Dendritic cell treated with granulocyte-macrophage colony-stimulating factor and Interleukin-4, amounts not matched to agents 40 ng/mL and 50 ng/mL, for 4 days (primary cell): ENCODE measurements at regions of chr5 and their contacts with region 1.

Region 1: GRCh38 chr5:133968049-133968980 is at the start of gene C5orf15:
- H3K4me3 Mint-ChIP-seq: peak within 1 kb of the TSS; percentile 90
- H3K27ac Mint-ChIP-seq: peak within 1 kb of the TSS; percentile 97
- H3K4me1 Mint-ChIP-seq: peaks cover 29% of the 10 kb centered on the region
- H3K27me3 Mint-ChIP-seq: no peaks in the 10 kb centered on the region

Region 2: DNA sequence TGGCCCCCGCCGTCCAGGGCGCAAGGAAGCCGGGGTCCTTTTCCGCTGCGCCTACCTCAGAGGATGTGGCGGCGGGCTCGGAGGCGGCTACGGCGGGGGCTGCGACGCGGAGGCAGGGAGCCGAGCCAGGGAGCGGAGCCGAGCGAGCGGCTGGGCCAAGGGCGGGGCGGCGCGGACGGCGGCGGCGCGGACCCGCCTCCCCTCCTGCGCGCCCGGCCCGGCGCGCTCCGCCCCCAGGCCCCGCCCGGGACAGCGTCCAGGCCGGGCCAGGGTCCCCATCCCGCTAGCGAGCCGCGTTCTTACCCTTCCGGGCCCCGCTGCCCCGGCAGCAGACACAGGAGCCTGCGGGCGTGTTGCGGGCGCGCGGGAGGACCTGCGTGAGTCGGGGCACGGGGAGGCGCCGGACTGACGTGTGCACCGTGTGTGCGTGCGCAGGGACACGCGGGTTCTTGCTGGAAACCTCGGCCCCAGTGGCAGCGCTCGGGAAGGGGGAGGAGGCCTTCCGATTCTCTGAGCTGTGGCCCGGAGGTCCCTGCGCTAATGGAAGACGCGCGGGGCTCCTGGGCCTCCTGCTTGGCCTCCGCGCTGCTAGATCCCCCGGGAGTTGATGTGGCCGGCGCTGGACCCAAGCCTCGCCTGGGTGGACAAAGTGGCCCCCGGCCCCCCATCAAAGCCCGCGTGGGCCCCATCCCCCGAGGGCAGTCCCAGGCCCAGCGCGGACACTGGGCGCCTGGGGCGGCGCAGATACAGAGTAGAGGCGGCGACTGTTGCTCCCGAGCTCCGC is 36.5 kb after region 1 on chr5 and contains the start of gene VDAC1:
- intact Hi-C with region 1: loop called (anchors 1 kb)
- H3K4me3 Mint-ChIP-seq: peak within 1 kb of the TSS; percentile 86
- H3K27ac Mint-ChIP-seq: peak within 1 kb of the TSS; percentile 91
- H3K4me1 Mint-ChIP-seq: peaks cover 48% of the 10 kb centered on the region
- H3K27me3 Mint-ChIP-seq: peaks cover 40% of the 10 kb centered on the region

Region 3: DNA sequence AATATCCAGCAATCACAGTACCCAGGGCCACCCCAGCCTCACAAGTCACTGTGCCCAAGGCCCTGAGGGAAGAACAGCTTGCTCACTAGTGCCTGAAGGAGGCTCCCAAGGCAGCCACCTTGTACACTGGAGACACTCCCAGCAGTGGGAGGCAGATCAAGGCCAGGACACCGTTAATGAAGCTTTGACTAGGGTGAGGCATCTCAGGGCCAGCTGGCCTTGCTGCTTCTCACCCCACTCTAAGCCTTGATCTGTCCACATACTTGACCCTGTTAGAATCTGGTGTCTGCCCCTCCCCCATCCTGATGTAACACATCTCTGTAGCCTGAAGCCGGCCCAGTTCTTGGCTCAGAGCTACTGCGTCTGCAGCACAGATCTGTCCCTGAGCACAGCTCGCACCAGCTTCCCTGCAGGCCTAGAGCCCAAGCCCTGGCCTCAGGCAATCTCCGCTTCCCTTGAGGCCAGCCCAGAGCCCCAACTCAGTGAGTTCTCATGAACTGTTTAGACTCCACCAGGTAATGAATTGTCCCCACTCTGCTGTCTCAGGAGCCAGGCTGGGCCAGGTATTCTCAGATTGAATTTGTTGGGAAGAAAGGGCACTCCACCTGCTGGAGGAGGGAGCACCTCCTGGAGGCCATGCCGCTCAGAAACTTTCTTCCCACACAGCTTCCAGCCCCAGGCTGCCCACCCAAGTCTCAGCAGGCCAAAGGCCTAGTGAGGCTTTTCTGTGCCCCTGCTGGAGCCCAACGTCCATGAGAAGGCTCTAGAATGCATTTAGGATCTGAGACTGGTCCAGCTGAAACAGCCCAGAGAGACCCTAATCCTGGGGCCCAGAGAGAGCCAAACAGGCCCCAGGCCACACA is 543.7 kb after region 1 on chr5:
- intact Hi-C with region 1: no loop called
- H3K4me3 Mint-ChIP-seq: no peak overlapping the region
- H3K27ac Mint-ChIP-seq: no peak overlapping the region
- H3K4me1 Mint-ChIP-seq: peaks cover 5% of the 10 kb centered on the region
- H3K27me3 Mint-ChIP-seq: no peaks in the 10 kb centered on the region